PC-9 (cell line): ENCODE measurements at regions of chr2 and their contacts with region 1.

Region 1: GRCh38 chr2:235595422-235596010 is 101.7 kb downstream of the AGAP1 start:
- DNase-seq: peak; percentile 71 to 83
- H3K4me3 ChIP-seq: no peak overlapping the region
- H3K27ac ChIP-seq: no peak overlapping the region
- H3K4me1 ChIP-seq: no peaks in the 10 kb centered on the region
- H3K27me3 ChIP-seq: no peaks in the 10 kb centered on the region
- CTCF ChIP-seq: peak; percentile 98

Region 2: GRCh38 chr2:235135990-235136561 is 459.4 kb before region 1 on chr2:
- CTCF ChIA-PET with region 1: interaction called, 7 read pairs
- POLR2A ChIA-PET with region 1: interaction called, 10 read pairs
- intact Hi-C with region 1: loop called (anchors 1 kb)
- DNase-seq: peak; percentile 78 to 86
- H3K4me3 ChIP-seq: no peak overlapping the region
- H3K27ac ChIP-seq: no peak overlapping the region
- H3K4me1 ChIP-seq: no peaks in the 10 kb centered on the region
- H3K27me3 ChIP-seq: no peaks in the 10 kb centered on the region
- CTCF ChIP-seq: peak; percentile 94

Region 3: DNA sequence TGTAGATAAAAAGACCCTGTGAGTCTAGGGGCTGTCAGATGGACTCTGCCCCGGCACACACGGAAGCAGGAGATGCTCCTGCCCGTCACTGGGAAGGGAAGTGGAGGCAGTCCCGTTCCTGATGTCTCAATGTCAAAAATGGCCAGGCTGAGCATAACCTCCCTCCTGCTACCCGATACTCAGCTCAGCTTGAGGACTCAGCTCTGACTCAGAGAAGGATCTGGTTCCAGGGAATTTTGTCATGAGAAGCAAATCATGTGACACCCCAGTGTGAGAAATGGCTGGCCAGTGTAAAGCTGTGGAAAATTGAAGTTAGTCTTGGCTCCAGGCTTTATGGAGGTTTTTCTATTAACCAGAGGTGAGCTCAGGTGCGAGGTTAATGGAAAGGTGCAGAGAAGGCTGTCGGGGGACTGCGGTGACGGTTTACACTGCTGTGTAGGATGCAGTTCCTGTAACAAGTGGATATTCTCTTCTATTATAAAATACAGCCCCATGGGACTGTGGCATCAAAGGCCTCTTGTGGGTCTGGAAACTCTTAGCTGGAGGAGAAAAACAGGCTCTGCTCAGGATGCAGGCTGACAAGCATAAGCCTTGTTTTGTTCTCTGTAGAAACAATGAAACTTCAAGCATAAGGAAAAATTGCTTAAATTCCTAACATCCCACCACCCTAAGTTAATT is 126.4 kb before region 1 on chr2:
- CTCF ChIA-PET with region 1: interaction called, 11 read pairs
- POLR2A ChIA-PET with region 1: no interaction called
- intact Hi-C with region 1: no loop called
- DNase-seq: peak; percentile 63 to 93
- H3K4me3 ChIP-seq: peak overlapping the region; percentile 22; the same call in 1 of the 2 replicates
- H3K27ac ChIP-seq: peak overlapping the region; percentile 87
- H3K4me1 ChIP-seq: peaks cover 29% of the 10 kb centered on the region
- H3K27me3 ChIP-seq: no peaks in the 10 kb centered on the region
- CTCF ChIP-seq: no peak

Region 4: GRCh38 chr2:235543104-235543762 is 52.3 kb before region 1 on chr2:
- CTCF ChIA-PET with region 1: no interaction called
- POLR2A ChIA-PET with region 1: no interaction called
- intact Hi-C with region 1: loop called (anchors 2 kb)
- DNase-seq: peak; percentile 71 to 79
- H3K4me3 ChIP-seq: peak overlapping the region; percentile 49; the same call in 1 of the 2 replicates
- H3K27ac ChIP-seq: peak overlapping the region; percentile 91
- H3K4me1 ChIP-seq: peaks cover 58% of the 10 kb centered on the region
- H3K27me3 ChIP-seq: no peaks in the 10 kb centered on the region
- CTCF ChIP-seq: no peak

Region 5: GRCh38 chr2:235654103-235654813 is 58.7 kb after region 1 on chr2:
- CTCF ChIA-PET with region 1: no interaction called
- POLR2A ChIA-PET with region 1: no interaction called
- intact Hi-C with region 1: no loop called
- DNase-seq: no peak
- H3K4me3 ChIP-seq: no peak overlapping the region
- H3K27ac ChIP-seq: no peak overlapping the region
- H3K4me1 ChIP-seq: 0 out of 2 replicates have a peak, but pooled peaks cover 8% of the 10 kb centered on the region
- H3K27me3 ChIP-seq: no peaks in the 10 kb centered on the region
- CTCF ChIP-seq: no peak

Region 6: DNA sequence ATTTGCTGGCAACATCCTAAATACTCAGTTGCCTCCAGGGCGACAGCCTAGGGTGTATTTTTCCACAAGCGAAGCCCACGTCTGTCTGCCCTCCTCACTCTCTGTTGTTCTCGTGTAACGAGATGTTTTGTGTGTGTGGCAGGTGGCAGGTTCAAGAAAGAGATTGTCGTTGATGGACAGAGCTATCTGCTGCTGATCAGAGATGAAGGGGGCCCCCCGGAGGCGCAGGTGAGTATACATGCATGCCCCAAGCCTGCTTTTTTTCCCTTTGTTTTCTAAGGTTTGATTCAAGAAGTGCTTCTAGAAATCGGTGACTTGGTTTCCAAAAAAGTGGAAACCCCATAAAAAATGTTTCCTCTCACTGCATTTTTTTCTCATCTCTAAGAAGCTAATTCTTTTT is 145.3 kb after region 1 on chr2:
- CTCF ChIA-PET with region 1: interaction called, 35 read pairs
- POLR2A ChIA-PET with region 1: interaction called, 20 read pairs
- intact Hi-C with region 1: loop called (anchors 1 kb)
- DNase-seq: peak in 1 of 2 experiments; percentile 62
- H3K4me3 ChIP-seq: no peak overlapping the region
- H3K27ac ChIP-seq: 0 out of 2 replicates have a peak overlapping the region, but pooled peaks have one; percentile 0
- H3K4me1 ChIP-seq: peaks cover 3% of the 10 kb centered on the region
- H3K27me3 ChIP-seq: no peaks in the 10 kb centered on the region
- CTCF ChIP-seq: peak; percentile 75

Region 7: DNA sequence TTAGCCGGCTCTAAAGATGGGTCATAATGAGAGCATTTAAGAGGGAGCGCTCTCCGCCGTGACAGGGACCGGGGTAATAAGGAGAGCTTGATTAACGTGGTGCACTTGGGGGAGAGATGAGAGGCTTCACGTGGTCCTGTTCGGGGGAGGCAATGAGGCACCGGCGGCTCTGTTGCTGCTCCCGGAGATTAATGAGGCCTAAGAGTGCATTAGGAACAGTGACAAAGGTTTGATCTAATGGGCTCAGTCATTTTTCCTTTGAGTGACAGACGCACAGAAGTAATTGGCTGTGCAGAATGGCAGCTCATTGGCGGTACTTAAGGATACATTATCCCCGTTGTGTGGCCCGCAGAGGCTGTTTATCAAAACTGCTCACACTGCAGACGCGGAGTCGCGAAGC is 322.0 kb after region 1 on chr2:
- CTCF ChIA-PET with region 1: no interaction called
- POLR2A ChIA-PET with region 1: no interaction called
- intact Hi-C with region 1: no loop called
- DNase-seq: no peak
- H3K4me3 ChIP-seq: no peak overlapping the region
- H3K27ac ChIP-seq: no peak overlapping the region
- H3K4me1 ChIP-seq: no peaks in the 10 kb centered on the region
- H3K27me3 ChIP-seq: no peaks in the 10 kb centered on the region
- CTCF ChIP-seq: no peak